T-cell (primary cell): ENCODE measurements at regions of chr7 and their contacts with region 1.

Region 1: GRCh38 chr7:116236020-116236630 is 25.8 kb downstream of the TES start:
- DNase-seq: peak in 32 of 35 experiments; percentile 16 to 81 (median 58)
- ATAC-seq: peak; percentile 62 to 79 (median 70)
- H3K4me3 ChIP-seq: no peak overlapping the region
- H3K4me3 Mint-ChIP-seq: no peak overlapping the region
- H3K27ac ChIP-seq: no peak overlapping the region
- H3K27ac Mint-ChIP-seq: no peak overlapping the region
- H3K4me1 ChIP-seq: peaks cover 16 to 31% of the 10 kb centered on the region in 2 experiments
- H3K4me1 Mint-ChIP-seq: peaks cover 74 to 85% (median 83%) of the 10 kb centered on the region in 3 donors
- H3K27me3 ChIP-seq: no peaks in the 10 kb centered on the region
- H3K27me3 Mint-ChIP-seq: no peaks in the 10 kb centered on the region

Region 2: DNA sequence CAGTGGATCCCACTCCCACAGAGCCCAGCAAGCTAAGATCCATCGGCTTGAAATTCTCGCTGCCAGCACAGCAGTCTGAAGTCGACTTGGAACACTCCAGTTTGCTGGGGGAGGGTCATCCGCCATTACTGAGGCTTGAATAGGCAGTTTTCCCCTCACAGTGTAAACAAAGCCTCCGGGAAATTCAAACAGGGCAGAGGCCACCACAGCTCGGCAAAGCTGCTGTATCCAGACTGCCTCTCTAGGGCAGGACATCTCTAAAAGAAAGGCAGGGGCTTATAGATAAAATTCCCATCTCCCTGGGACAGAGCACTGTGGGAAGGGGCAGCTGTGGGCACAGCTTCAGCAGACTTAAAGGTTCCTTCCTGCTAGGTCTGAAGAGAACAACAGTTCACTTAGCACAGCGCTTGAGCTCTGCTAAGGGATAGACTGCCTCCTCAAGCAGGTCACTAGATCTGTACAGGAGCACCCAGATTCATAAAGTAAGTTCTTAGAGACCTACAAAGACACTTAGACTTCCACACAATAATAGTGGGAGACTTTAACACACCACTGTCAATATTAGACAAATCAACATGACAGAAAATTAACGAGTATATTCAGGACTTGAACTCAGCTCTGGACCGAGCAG is 346.7 kb before region 1 on chr7:
- CTCF ChIA-PET with region 1: no interaction called
- POLR2A ChIA-PET with region 1: no interaction called
- DNase-seq: no peak
- ATAC-seq: no peak
- H3K4me3 ChIP-seq: no peak overlapping the region
- H3K4me3 Mint-ChIP-seq: no peak overlapping the region
- H3K27ac ChIP-seq: no peak overlapping the region
- H3K27ac Mint-ChIP-seq: no peak overlapping the region
- H3K4me1 ChIP-seq: no peaks in the 10 kb centered on the region
- H3K4me1 Mint-ChIP-seq: no peaks in the 10 kb centered on the region
- H3K27me3 ChIP-seq: peaks cover 0 to 3% of the 10 kb centered on the region in 2 experiments
- H3K27me3 Mint-ChIP-seq: no peaks in the 10 kb centered on the region

Region 3: GRCh38 chr7:116173051-116174028 is 62.8 kb before region 1 on chr7:
- CTCF ChIA-PET with region 1: interaction called, 243 to 450 read pairs
- POLR2A ChIA-PET with region 1: no interaction called
- DNase-seq: peak in 12 of 35 experiments; percentile 8 to 76 (median 18)
- ATAC-seq: peak in 2 of 4 experiments; percentile 56 to 61
- H3K4me3 ChIP-seq: no peak overlapping the region
- H3K4me3 Mint-ChIP-seq: no peak overlapping the region
- H3K27ac ChIP-seq: no peak overlapping the region
- H3K27ac Mint-ChIP-seq: no peak overlapping the region
- H3K4me1 ChIP-seq: no peaks in the 10 kb centered on the region
- H3K4me1 Mint-ChIP-seq: no peaks in the 10 kb centered on the region
- H3K27me3 ChIP-seq: no peaks in the 10 kb centered on the region
- H3K27me3 Mint-ChIP-seq: peaks cover 4 to 8% of the 10 kb centered on the region in 2 donors

Region 4: GRCh38 chr7:116200963-116201362 is 35.2 kb before region 1 on chr7:
- CTCF ChIA-PET with region 1: interaction called, 5 to 16 read pairs
- POLR2A ChIA-PET with region 1: no interaction called
- DNase-seq: no peak
- ATAC-seq: no peak
- H3K4me3 ChIP-seq: no peak overlapping the region
- H3K4me3 Mint-ChIP-seq: no peak overlapping the region
- H3K27ac ChIP-seq: no peak overlapping the region
- H3K27ac Mint-ChIP-seq: no peak overlapping the region
- H3K4me1 ChIP-seq: no peaks in the 10 kb centered on the region
- H3K4me1 Mint-ChIP-seq: no peaks in the 10 kb centered on the region
- H3K27me3 ChIP-seq: no peaks in the 10 kb centered on the region
- H3K27me3 Mint-ChIP-seq: no peaks in the 10 kb centered on the region

Region 5: GRCh38 chr7:116211006-116211912 is 24.9 kb before region 1 on chr7:
- CTCF ChIA-PET with region 1: interaction called, 10 to 107 read pairs
- POLR2A ChIA-PET with region 1: interaction called, 5 to 32 read pairs
- DNase-seq: peak; percentile 58 to 89 (median 76)
- ATAC-seq: peak; percentile 84 to 89 (median 86)
- H3K4me3 ChIP-seq: peak overlapping the region; percentile 81 to 98
- H3K4me3 Mint-ChIP-seq: peak overlapping the region; percentile 97
- H3K27ac ChIP-seq: peak overlapping the region; percentile 91
- H3K27ac Mint-ChIP-seq: peak overlapping the region; percentile 97
- H3K4me1 ChIP-seq: peaks cover 17 to 42% of the 10 kb centered on the region in 2 experiments
- H3K4me1 Mint-ChIP-seq: peaks cover 52 to 63% (median 53%) of the 10 kb centered on the region in 3 donors
- H3K27me3 ChIP-seq: no peaks in the 10 kb centered on the region
- H3K27me3 Mint-ChIP-seq: no peaks in the 10 kb centered on the region

Region 6: GRCh38 chr7:116218051-116218645 is 18.0 kb before region 1 on chr7:
- CTCF ChIA-PET with region 1: interaction called, 8 to 107 read pairs
- POLR2A ChIA-PET with region 1: interaction called in 1 of 2 experiments, 3 read pairs
- DNase-seq: no peak
- ATAC-seq: no peak
- H3K4me3 ChIP-seq: no peak overlapping the region
- H3K4me3 Mint-ChIP-seq: peak overlapping the region; percentile 1 to 61 (median 28)
- H3K27ac ChIP-seq: no peak overlapping the region
- H3K27ac Mint-ChIP-seq: peak overlapping the region; percentile 66 to 75
- H3K4me1 ChIP-seq: peaks cover 23 to 78% of the 10 kb centered on the region in 2 experiments
- H3K4me1 Mint-ChIP-seq: peaks cover 91 to 92% (median 92%) of the 10 kb centered on the region in 3 donors
- H3K27me3 ChIP-seq: no peaks in the 10 kb centered on the region
- H3K27me3 Mint-ChIP-seq: no peaks in the 10 kb centered on the region

Region 7: GRCh38 chr7:116224492-116225098 is 11.5 kb before region 1 on chr7:
- CTCF ChIA-PET with region 1: interaction called, 14 to 32 read pairs
- POLR2A ChIA-PET with region 1: no interaction called
- DNase-seq: peak in 3 of 35 experiments; percentile 3 to 58 (median 9)
- ATAC-seq: peak in 2 of 4 experiments; percentile 57 to 82
- H3K4me3 ChIP-seq: no peak overlapping the region
- H3K4me3 Mint-ChIP-seq: peak overlapping the region; percentile 57 to 64 (median 58)
- H3K27ac ChIP-seq: no peak overlapping the region
- H3K27ac Mint-ChIP-seq: peak overlapping the region; percentile 60 to 69
- H3K4me1 ChIP-seq: peaks cover 15 to 57% of the 10 kb centered on the region in 2 experiments
- H3K4me1 Mint-ChIP-seq: peaks cover 87 to 93% (median 91%) of the 10 kb centered on the region in 3 donors
- H3K27me3 ChIP-seq: no peaks in the 10 kb centered on the region
- H3K27me3 Mint-ChIP-seq: no peaks in the 10 kb centered on the region

Region 8: DNA sequence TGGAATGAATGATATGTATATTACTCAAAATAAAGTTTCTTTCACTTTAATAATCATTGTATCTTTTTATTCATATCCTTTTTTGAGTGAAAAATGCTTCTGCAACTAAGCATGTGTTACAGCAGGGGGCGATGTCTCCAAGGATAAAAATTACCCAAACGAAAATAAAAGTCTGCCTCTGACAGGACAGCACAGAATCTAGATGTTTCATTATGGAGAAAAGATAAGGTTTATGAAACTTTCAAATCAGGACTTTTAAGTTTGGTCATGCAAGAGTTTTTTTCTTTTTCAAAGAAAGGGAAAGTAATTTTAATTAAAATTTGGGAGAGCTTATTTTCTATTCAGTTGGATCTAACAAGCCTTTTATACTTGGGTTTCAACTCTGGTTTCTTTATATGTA is 22.6 kb after region 1 on chr7:
- CTCF ChIA-PET with region 1: interaction called, 10 to 13 read pairs
- POLR2A ChIA-PET with region 1: no interaction called
- DNase-seq: peak in 20 of 35 experiments; percentile 3 to 68 (median 23)
- ATAC-seq: peak in 2 of 4 experiments; percentile 45 to 58
- H3K4me3 ChIP-seq: no peak overlapping the region
- H3K4me3 Mint-ChIP-seq: no peak overlapping the region
- H3K27ac ChIP-seq: no peak overlapping the region
- H3K27ac Mint-ChIP-seq: peak overlapping the region; percentile 43 to 55
- H3K4me1 ChIP-seq: no peaks in the 10 kb centered on the region
- H3K4me1 Mint-ChIP-seq: peaks cover 7 to 19% (median 15%) of the 10 kb centered on the region in 3 donors
- H3K27me3 ChIP-seq: no peaks in the 10 kb centered on the region
- H3K27me3 Mint-ChIP-seq: no peaks in the 10 kb centered on the region